Activated naive CD8-positive, alpha-beta T cell treated with anti-CD3 and anti-CD28 coated beads, Interleukin-2, amount 10 ng/mL, durations not matched to agents 7 days and 5 days (primary cell): ENCODE measurements at regions of chr2 and their contacts with region 1.

Region 1: GRCh38 chr2:196160101-196160500 is 11.3 kb downstream of the STK17B start:
- DNase-seq: no peak
- ATAC-seq: peak; percentile 20
- H3K4me3 Mint-ChIP-seq: peak overlapping the region; percentile 89
- H3K27ac Mint-ChIP-seq: peak overlapping the region; percentile 92
- H3K4me1 Mint-ChIP-seq: peaks cover 60% of the 10 kb centered on the region
- H3K27me3 Mint-ChIP-seq: no peaks in the 10 kb centered on the region

Region 2: DNA sequence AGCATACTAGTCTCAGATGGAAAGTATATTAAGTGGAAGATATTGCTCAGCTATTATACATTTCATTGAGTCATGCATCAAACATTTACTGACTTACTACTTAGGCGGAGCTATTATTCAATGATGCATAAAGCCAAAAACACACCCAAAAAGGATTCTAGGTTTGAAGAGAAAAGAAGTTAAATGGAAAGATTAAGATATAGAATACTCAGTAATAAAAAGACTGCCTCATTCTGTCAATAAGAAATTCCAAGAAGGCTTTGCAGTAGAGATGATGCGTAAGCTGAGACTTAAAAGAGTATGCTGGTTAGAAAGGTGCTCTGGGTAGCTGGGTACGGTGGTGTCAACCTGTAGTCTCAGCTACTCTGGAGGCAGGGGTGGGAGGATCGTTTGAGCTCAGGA is 16.4 kb before region 1 on chr2:
- POLR2A ChIA-PET with region 1: interaction called, 154 read pairs
- DNase-seq: no peak
- ATAC-seq: no peak
- H3K4me3 Mint-ChIP-seq: peak overlapping the region; percentile 64
- H3K27ac Mint-ChIP-seq: peak overlapping the region; percentile 77
- H3K4me1 Mint-ChIP-seq: peaks cover 72% of the 10 kb centered on the region
- H3K27me3 Mint-ChIP-seq: no peaks in the 10 kb centered on the region

Region 3: DNA sequence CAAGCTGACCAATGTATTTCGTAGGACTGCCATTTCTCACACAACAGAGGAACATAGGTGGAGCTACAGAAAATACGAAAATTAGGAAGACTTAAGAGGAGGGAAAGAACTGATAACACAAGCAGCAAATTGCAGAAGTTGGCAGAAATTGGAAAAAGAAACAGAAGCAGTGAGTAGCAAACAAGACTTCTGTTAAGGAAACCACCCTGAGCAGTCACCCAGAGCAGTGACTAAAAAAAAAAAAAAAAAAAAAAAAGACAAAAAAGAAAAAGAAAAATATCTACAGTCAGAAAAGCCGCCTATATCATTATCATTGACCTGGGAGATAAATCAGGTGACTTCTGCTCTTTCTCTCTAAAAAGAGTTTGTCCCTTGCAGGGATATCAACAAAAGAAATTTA is 10.2 kb before region 1 on chr2:
- POLR2A ChIA-PET with region 1: interaction called, 154 read pairs
- DNase-seq: no peak
- ATAC-seq: peak; percentile 2
- H3K4me3 Mint-ChIP-seq: peak overlapping the region; percentile 69
- H3K27ac Mint-ChIP-seq: peak overlapping the region; percentile 74
- H3K4me1 Mint-ChIP-seq: peaks cover 77% of the 10 kb centered on the region
- H3K27me3 Mint-ChIP-seq: no peaks in the 10 kb centered on the region

Region 4: DNA sequence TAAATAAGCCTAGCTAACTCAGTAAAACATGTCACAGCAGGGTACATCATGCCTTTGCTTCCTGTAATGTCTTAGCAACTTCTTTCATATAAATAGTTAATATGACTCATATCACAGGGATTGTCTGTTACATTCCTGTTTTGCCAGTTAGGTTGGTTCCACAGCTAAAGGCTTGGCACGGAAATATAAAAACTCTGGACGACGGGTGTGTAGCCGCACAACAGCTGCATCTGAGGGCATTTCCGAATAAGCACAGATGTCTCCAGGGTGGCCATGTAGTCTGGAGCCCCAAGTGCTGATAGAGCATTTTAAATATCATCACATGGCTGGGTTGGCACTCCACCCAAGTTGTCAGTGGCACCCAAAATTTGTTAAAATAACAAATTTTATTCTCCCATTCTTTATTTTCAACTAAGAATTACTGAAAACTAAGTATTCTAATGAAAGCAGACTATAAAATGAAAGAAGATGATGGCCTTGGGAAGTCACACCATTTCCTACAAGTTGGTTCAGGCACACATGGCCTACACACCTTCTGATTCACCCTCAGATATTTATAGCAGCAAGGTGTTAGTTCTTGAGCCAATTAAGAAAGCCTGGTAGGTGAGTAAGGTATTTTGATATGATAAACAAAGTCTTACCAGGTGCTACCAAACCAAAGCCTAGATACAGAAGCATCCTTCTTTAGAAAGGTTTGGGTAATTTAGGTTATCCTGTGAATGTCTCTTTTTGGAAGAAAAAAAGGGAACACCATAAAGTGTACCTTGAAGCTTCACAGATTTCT is 73.1 kb after region 1 on chr2:
- POLR2A ChIA-PET with region 1: interaction called, 14 read pairs
- DNase-seq: no peak
- ATAC-seq: no peak
- H3K4me3 Mint-ChIP-seq: peak overlapping the region; percentile 55
- H3K27ac Mint-ChIP-seq: peak overlapping the region; percentile 88
- H3K4me1 Mint-ChIP-seq: peaks cover 82% of the 10 kb centered on the region
- H3K27me3 Mint-ChIP-seq: no peaks in the 10 kb centered on the region